K562 (cell line): ENCODE measurements at regions of chr10 and their contacts with region 1.

Region 1: DNA sequence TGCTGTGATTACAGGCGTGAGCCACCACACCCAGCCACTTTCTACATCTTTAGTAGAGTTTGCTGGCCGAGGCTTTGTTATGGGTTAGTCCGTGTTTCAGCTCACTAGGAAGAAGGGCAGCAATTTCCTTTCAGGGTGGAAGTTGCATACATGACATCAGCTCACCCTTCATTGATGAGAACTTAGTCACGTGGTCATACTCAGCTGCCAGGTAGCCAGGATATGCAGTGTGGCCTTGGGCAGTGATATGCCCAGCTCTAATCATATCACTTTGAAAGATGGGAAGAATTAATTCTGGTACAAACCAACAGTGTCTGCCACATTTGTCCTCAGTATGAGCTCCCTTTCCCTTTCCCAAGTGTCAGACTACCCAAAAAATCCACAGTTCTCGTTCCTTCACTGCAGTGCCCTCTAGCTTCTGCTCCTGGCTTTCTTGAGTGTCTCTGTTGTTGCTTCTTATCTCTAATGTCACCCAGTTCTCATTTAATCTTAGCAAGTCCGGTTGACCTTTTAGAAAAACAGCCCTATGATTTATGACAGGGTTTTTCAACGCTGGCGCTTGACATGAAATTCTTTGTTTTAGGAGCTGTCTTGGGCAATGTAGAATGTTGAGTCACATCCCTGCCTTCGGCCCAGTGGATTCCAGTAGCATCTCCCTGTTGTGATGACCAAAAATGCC is 108.7 kb upstream of the ITGB1 start:
- DNase-seq: peak in 2 of 4 experiments; percentile 47 to 57
- ATAC-seq: peak; percentile 95
- H3K4me3 ChIP-seq: no peak overlapping the region
- H3K27ac ChIP-seq: no peak overlapping the region
- H3K4me1 ChIP-seq: peaks cover 0 to 5% of the 10 kb centered on the region in 2 experiments; a peak in 2 of 5 replicates
- H3K27me3 ChIP-seq: no peaks in the 10 kb centered on the region
- CTCF ChIP-seq: peak; percentile 43 to 72 (median 61)
- EP300 ChIP-seq: peak; percentile 67
- POLR2A ChIP-seq: no peak
- RAD21 ChIP-seq: peak; percentile 22 to 43; a peak in 2 of 4 replicates

Region 2: GRCh38 chr10:33008499-33009243 is 58.0 kb before region 1 on chr10:
- CTCF ChIA-PET with region 1: no interaction called
- POLR2A ChIA-PET with region 1: no interaction called
- in situ Hi-C with region 1: no loop called
- intact Hi-C with region 1: loop called (anchors 2 kb)
- DNase-seq: peak; percentile 59 to 80 (median 64)
- ATAC-seq: peak; percentile 75
- H3K4me3 ChIP-seq: no peak overlapping the region
- H3K27ac ChIP-seq: no peak overlapping the region
- H3K4me1 ChIP-seq: peaks cover 3 to 6% of the 10 kb centered on the region in 2 experiments; a peak in 3 of 5 replicates
- H3K27me3 ChIP-seq: peaks cover 0 to 3% of the 10 kb centered on the region in 2 experiments; a peak in 1 of 5 replicates
- CTCF ChIP-seq: peak; percentile 87 to 98 (median 94)
- EP300 ChIP-seq: no peak
- POLR2A ChIP-seq: no peak
- RAD21 ChIP-seq: peak; percentile 99 to 100

Region 3: GRCh38 chr10:33055625-33056024 is 11.1 kb before region 1 on chr10:
- CTCF ChIA-PET with region 1: no interaction called
- POLR2A ChIA-PET with region 1: interaction called, 5 read pairs
- in situ Hi-C with region 1: no loop called
- intact Hi-C with region 1: loop called (anchors 1 kb)
- DNase-seq: no peak
- ATAC-seq: no peak
- H3K4me3 ChIP-seq: no peak overlapping the region
- H3K27ac ChIP-seq: no peak overlapping the region
- H3K4me1 ChIP-seq: peaks cover 7 to 13% of the 10 kb centered on the region in 2 experiments; a peak in 3 of 5 replicates
- H3K27me3 ChIP-seq: peaks cover 0 to 4% of the 10 kb centered on the region in 2 experiments; a peak in 1 of 5 replicates
- CTCF ChIP-seq: no peak
- EP300 ChIP-seq: no peak
- POLR2A ChIP-seq: no peak
- RAD21 ChIP-seq: no peak

Region 4: DNA sequence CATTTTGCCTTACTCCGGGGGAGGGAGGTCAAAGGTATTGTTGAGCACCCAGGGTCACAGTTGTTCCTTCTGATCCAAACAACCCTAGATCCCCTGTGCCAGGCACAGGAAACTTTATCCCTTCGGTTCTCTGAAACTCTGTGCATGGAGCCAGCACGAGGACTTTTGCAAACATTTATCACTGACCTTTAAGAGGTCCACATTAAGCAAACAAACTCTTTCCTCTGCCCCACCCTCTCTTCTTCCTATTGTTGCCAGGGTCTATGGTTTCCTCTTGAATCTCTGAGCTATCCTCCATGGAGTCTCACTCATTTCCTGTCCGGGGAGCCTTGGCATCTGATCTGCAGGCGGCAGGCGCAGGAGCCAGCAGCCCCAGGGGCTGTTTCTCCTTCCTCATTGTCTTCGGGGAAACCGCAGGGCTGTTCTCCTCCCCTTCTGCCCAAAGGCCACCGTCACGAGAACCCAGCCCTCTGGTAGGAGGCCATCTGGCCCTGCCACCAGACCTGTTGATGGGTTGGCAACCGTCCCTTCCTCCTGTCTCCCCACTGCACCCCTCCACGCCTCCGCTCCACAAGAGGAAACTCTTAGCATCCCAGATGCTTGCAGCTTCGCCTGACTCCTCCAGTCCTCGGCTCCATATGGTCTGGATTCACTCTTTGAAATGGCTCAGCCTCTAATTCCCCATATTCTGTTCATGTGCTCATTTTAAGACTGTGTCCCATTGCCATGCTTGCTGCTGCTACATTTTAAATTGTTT is 595.1 kb after region 1 on chr10:
- CTCF ChIA-PET with region 1: no interaction called
- POLR2A ChIA-PET with region 1: no interaction called
- in situ Hi-C with region 1: no loop called
- intact Hi-C with region 1: no loop called
- DNase-seq: no peak
- ATAC-seq: no peak
- H3K4me3 ChIP-seq: no peak overlapping the region
- H3K27ac ChIP-seq: no peak overlapping the region
- H3K4me1 ChIP-seq: no peaks in the 10 kb centered on the region
- H3K27me3 ChIP-seq: no peaks in the 10 kb centered on the region
- CTCF ChIP-seq: no peak
- EP300 ChIP-seq: no peak
- POLR2A ChIP-seq: no peak
- RAD21 ChIP-seq: no peak